Activated B cell treated with CpG ODN at 0.5 μM for 24 hours (primary cell): ENCODE measurements at regions of chr1 and their contacts with region 1.

Region 1: DNA sequence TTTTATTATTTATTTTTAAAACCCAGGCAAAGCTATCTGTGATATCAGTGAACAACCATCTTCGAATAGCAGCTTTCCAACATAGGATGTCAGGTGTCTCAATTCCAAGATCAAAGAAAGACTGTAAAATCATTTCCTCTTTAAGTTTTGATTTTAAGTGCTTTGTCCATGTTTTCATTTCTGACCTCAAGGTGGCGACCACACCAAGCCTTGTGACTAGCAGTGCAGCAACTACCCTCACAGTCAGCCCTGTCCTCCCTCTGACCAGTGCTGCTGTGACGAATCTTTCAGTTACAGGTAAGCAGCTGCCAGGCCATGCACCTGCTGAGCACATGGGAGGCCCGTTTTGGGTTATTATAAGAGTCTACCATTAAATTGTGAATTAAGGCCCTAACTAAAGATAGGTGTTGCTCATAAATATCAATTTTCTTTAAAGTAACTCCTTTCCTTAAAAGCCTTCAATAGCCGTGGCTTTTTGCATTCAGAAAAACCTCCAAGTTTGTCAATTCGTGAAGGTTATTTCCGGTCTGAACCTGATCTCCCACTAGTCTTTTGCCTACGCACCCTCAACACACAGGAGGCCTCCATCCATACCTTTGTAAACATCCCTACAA is 117.0 kb downstream of the CD247 start:
- DNase-seq: peak; percentile 26
- ATAC-seq: peak; percentile 68
- H3K4me3 Mint-ChIP-seq: no peak overlapping the region
- H3K27ac Mint-ChIP-seq: no peak overlapping the region
- H3K4me1 Mint-ChIP-seq: no peaks in the 10 kb centered on the region
- H3K27me3 Mint-ChIP-seq: no peaks in the 10 kb centered on the region
- CTCF ChIP-seq: peak; percentile 12

Region 2: GRCh38 chr1:167066333-167067122 is 334.8 kb before region 1 on chr1:
- CTCF ChIA-PET with region 1: no interaction called
- POLR2A ChIA-PET with region 1: no interaction called
- intact Hi-C with region 1: loop called (anchors 2 kb)
- DNase-seq: peak; percentile 76
- ATAC-seq: peak; percentile 94
- H3K4me3 Mint-ChIP-seq: no peak overlapping the region
- H3K27ac Mint-ChIP-seq: no peak overlapping the region
- H3K4me1 Mint-ChIP-seq: no peaks in the 10 kb centered on the region
- H3K27me3 Mint-ChIP-seq: no peaks in the 10 kb centered on the region
- CTCF ChIP-seq: peak; percentile 70

Region 3: DNA sequence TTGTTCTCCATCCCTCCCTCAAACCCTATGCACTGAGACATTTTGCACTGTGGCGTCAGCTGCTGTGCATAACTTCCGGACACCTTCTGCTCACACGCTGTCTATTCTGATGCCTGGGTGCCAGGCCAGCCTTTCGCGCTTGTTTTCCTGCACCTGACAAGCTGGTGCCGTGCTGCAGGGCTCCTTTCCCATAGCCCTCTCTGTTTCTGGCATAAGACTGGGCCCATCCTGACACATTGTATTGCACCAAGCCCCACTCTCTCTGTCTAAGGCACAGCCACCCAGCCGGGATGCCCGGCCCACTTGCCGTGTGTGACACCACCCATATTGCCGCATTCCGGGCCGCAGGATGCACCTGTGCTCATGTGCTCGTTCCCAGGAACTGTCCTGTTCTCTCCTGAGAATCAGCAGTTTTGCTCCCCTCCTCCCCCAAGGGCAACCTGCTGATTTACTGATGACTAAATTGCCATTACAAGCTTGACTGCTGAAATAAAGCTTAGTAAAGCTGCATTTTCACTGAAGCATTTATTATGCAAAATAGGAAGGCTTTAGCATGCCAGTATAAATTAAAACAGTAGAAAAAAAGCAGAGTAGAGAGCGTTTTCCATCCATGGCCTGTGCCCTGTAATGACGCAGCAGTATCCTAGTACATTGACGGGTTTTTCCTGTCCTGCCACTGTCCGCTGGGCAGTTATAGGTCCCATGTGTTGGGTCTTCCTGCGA is 28.9 kb after region 1 on chr1:
- CTCF ChIA-PET with region 1: interaction called, 11 read pairs
- POLR2A ChIA-PET with region 1: interaction called, 7 read pairs
- intact Hi-C with region 1: no loop called
- DNase-seq: no peak
- ATAC-seq: peak; percentile 35
- H3K4me3 Mint-ChIP-seq: peak overlapping the region; percentile 61
- H3K27ac Mint-ChIP-seq: peak overlapping the region; percentile 90
- H3K4me1 Mint-ChIP-seq: peaks cover 53% of the 10 kb centered on the region
- H3K27me3 Mint-ChIP-seq: no peaks in the 10 kb centered on the region
- CTCF ChIP-seq: no peak

Region 4: GRCh38 chr1:167499664-167500101 is 98.3 kb after region 1 on chr1:
- CTCF ChIA-PET with region 1: no interaction called
- POLR2A ChIA-PET with region 1: no interaction called
- intact Hi-C with region 1: loop called (anchors 1 kb)
- DNase-seq: peak; percentile 31
- ATAC-seq: peak; percentile 96
- H3K4me3 Mint-ChIP-seq: peak overlapping the region; percentile 64
- H3K27ac Mint-ChIP-seq: peak overlapping the region; percentile 59
- H3K4me1 Mint-ChIP-seq: peaks cover 38% of the 10 kb centered on the region
- H3K27me3 Mint-ChIP-seq: peaks cover 67% of the 10 kb centered on the region
- CTCF ChIP-seq: no peak

Region 5: GRCh38 chr1:167553136-167554027 is 152.0 kb after region 1 on chr1 and contains the start of gene CREG1:
- CTCF ChIA-PET with region 1: interaction called, 6 read pairs
- POLR2A ChIA-PET with region 1: no interaction called
- intact Hi-C with region 1: loop called (anchors 1 kb)
- DNase-seq: peak; percentile 84
- ATAC-seq: peak; percentile 99
- H3K4me3 Mint-ChIP-seq: peak within 1 kb of the TSS; percentile 86
- H3K27ac Mint-ChIP-seq: peak within 1 kb of the TSS; percentile 41
- H3K4me1 Mint-ChIP-seq: peaks cover 19% of the 10 kb centered on the region
- H3K27me3 Mint-ChIP-seq: no peaks in the 10 kb centered on the region
- CTCF ChIP-seq: no peak
- total RNA-seq, gene CREG1: 3.1 and 3.8 TPM in 2 replicates